ENCODE measurements at regions of chrX and their contacts with region 1.

Region 1: GRCh38 chrX:103941201-103941975 is 21.0 kb upstream of the TMSB15B start:
- DNase-seq: peak; percentile 65
- H3K4me3 Mint-ChIP-seq: no peak overlapping the region
- H3K27ac Mint-ChIP-seq: no peak overlapping the region
- H3K4me1 Mint-ChIP-seq: no peaks in the 10 kb centered on the region
- H3K27me3 Mint-ChIP-seq: peaks cover 51% of the 10 kb centered on the region
- CTCF ChIP-seq: peak; percentile 53

Region 2: DNA sequence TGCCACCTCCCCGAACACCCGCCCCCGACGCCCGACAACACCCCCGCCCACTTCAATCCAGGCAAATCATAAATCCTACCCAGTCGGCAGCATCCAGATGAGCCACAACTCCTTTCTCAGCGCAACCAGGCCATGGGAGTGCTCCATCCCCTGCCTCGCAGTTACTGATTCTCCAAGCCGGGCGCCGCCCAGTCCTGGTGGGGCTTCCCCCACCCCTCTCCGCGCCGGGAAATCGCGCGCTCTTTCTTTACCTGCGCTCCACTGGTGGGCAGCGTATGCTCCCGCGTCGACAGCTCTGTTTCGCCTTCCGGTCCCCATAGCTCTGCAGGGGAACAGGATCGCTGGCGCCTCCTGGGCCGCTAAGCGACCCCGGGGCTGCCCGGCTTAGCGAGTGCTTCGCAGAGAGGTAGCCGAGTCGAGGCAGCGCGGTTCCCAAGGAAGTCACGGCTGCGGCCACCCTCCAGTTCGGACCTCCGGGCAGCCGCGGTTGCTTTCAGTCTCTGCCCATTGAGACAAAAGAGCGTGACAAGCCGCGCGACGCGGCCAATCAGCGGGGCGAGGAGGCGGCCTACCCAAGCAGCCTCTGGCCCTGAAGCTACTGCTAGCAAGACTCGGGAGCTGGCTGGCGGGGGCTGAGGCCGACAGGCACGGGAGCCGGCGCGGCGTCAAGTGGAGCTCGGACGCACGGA is 22.7 kb before region 1 on chrX:
- CTCF ChIA-PET with region 1: no interaction called
- POLR2A ChIA-PET with region 1: no interaction called
- intact Hi-C with region 1: loop called (anchors 2 kb)
- DNase-seq: peak; percentile 65
- H3K4me3 Mint-ChIP-seq: peak overlapping the region; percentile 80
- H3K27ac Mint-ChIP-seq: peak overlapping the region; percentile 22
- H3K4me1 Mint-ChIP-seq: peaks cover 5% of the 10 kb centered on the region
- H3K27me3 Mint-ChIP-seq: peaks cover 25% of the 10 kb centered on the region
- CTCF ChIP-seq: no peak

Measured in MCF 10A (cell line).